ENCODE measurements at regions of chr1 and their contacts with region 1.

Region 1: DNA sequence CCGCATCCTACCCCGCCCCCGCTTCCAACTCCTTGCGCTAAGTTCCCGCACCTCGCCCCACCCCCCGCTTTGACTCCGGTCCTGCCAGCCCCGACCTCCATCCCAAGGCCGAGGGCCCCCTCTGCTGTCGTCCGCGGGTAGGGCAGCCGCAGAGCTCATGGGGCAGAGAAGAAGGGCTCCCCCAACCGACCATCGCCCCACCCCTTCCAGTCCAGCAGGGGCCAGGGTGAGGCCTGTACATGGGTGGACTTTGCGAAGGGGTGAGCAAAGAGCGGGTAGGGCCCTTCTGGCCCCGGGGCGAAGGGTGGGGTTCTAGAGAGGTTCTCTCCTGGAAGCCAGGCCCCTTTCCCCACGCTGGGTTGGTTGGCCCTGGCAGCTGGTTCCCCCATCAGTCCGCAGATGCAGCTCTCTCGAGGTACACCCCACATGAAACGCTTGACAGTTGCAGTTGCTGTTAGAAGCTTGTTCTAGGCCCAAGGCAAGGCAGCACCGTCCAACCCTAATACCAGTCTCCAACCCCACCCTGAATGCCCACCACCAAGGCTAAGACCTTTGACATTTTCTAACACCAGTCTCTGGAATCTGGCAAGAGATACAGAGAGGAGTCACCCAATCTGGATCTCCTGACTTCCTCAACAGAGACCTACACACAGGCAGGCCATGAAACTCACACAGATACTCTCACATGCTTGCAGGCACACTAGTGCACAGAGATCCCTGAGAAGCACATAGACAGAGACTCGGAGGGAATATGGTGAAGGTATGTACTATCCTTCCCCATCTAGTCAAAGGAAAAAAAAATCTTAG is 25.3 kb upstream of the ADGRB2 start:
- DNase-seq: peak; percentile 91 to 99 (median 98)

Region 2: DNA sequence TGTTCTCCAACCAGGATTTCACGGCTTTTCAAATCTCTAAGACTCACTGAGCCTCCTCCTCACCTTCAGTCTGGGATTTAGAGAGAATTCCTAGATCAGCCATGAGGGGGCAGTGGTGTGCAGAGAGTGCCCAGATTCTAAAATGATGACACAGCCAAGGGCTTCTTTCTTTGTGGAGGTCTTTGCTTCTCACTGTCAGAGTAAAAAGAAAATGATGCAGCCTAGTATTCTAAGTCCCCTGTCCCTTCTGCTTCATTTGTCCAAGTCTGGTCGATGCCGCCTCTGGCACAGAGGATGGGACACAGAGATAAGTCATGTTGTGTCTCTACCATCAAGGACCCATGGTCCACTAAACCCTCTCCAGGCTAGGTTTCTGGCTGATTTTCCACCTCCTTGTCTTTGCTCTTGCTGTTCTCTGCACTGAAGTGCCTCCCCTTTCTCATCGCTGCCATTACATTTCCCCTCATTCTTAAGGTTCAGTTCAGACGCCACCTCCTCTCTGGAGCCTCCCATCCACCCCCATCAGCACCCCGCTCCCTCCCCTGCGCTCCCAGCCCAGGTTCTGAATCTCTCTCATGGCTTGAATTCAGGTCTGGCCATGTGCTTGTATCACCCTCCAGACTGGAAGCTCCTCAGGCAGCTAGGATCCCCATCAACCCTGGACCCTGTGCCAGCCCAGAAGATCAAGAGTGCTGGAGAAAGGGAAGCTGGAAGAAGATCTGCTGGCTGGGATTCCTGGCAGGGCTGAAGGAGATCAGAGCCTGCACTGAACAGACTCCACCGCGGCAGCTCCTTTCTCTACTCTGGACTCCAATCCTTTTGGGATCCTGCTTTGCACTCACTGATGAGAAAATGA is 225.1 kb before region 1 on chr1:
- intact Hi-C with region 1: loop called (anchors 2 kb)
- DNase-seq: peak in 6 of 10 donors; percentile 39 to 84 (median 62)

Region 3: DNA sequence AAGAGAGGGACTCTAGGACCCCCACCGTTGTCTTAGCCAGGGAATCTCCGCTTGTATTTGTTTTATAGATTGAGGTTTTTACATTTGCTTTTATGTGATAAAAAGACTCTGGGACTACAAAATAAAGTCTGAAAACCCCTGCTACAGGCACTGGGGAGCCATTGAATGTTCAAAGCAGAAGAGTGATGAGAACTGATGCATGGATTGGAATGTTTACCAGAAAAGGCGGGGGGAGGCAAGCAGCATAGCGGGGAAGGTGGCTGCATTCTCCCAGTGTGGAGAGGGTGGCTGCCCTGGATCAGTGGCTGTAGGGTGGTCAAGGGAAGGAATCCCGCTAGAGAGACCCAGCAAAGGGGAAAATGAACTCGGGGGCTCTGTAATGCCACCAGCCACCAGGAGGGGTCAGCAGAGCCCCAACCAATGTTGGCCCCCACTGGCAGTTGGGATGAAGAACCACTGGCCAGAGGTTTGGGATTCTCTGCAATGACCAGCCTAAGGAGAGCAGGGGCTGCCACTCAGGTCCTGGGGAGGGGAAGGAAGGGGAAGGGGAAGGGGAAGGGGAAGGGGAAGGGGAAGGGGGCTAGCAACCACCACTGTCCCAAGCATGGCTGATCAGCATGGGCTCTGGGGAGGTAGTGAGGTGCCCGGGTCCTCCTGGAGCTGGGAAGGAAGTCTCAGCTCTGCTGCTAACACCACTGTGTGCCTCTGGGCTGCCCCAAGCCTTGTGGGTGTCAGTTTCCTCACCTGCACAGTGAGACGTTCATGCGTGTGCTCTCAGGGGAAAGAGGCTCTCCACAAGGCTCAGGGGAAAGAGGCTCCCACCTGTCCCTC is 125.6 kb before region 1 on chr1:
- intact Hi-C with region 1: loop called (anchors 2 kb)
- DNase-seq: peak in 9 of 10 donors; percentile 43 to 95 (median 76)

Region 4: GRCh38 chr1:31715087-31715872 is 74.2 kb before region 1 on chr1:
- intact Hi-C with region 1: loop called (anchors 5 kb)
- DNase-seq: peak; percentile 55 to 96 (median 77)

Region 5: GRCh38 chr1:31762726-31763670 is 26.5 kb before region 1 on chr1:
- intact Hi-C with region 1: loop called (anchors 1 kb)
- DNase-seq: peak; percentile 67 to 98 (median 80)

Region 6: GRCh38 chr1:31938174-31938950 is 148.9 kb after region 1 on chr1 and contains the start of gene PTP4A2:
- intact Hi-C with region 1: loop called (anchors 10 kb)
- DNase-seq: peak; percentile 84 to 98 (median 89)